ENCODE measurements at regions of chr22 and their contacts with region 1.

Region 1: DNA sequence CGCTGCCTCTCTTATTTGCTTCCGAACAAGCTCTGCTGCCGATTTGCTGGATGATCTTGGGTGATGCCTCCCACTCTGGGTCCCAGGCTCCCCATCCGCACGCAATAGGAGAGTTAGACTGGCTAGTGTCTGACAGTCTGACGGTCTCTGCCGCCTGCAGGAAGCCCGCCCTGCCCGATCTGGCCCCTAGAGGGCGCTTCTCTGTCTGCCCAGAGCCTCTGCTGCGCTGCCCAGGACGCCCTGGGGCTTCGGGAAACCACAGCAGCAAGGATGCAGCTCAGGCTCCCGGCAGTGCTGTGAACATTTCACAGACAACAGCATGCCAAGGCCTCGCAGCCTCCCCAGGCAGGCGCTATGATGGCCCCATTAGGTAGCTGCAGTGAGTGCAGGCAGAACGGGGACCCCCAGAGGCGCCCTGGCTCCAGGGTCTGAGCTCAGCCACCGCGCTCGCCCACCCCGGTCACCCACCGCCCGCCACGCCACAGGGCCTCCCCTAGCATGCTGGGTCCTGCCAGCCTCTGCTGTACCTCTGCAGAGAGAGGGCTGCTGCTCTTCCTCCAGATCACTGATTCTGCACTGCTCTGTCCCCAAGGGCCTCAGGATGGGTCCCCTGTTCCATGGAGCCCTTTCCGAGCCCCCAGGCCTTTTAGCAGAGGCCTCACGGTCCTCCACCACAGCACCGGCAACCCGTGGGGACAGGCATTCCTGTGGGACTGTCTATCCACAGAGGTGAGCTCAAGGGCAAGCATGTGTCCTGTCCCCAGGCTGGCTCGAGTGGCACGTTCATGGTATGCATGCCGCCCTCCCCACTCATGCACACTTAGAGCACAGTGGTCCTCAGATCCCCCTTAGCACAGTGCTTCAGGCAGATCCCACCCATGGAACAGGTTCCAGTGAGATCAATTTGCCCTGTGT is 4.3 kb upstream of the BAIAP2L2 start:
- DNase-seq: peak; percentile 67
- H3K4me3 ChIP-seq: no peak overlapping the region
- H3K27ac ChIP-seq: no peak overlapping the region
- H3K4me1 ChIP-seq: peaks cover 7% of the 10 kb centered on the region
- H3K27me3 ChIP-seq: no peaks in the 10 kb centered on the region
- CTCF ChIP-seq: peak; percentile 96 to 98

Region 2: DNA sequence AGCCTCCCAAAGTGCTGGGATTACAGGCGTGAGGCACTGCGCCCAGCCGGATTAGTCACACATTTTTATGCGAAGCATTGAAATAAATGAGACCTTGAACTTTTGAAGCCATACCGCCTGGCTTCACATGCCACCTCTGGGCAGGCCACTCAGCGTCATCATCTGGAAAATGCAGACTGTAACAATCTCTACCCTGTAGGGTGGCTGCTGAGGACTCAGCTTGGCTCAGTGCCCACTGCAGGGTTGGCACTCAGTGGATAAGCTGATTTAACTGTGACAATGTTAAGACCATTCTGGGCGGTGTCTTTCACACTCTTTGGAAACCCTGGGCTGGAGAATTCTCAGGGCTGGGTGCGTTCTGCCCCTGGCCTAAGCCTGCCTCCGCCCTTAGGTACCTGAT is 466.8 kb before region 1 on chr22:
- CTCF ChIA-PET with region 1: no interaction called
- dilution Hi-C with region 1: no loop called
- in situ Hi-C with region 1: no loop called
- intact Hi-C with region 1: no loop called
- DNase-seq: no peak
- H3K4me3 ChIP-seq: no peak overlapping the region
- H3K27ac ChIP-seq: no peak overlapping the region
- H3K4me1 ChIP-seq: peaks cover 4% of the 10 kb centered on the region
- H3K27me3 ChIP-seq: no peaks in the 10 kb centered on the region
- CTCF ChIP-seq: no peak

Region 3: GRCh38 chr22:38074181-38075104 is 40.3 kb before region 1 on chr22:
- CTCF ChIA-PET with region 1: no interaction called
- dilution Hi-C with region 1: no loop called
- in situ Hi-C with region 1: no loop called
- intact Hi-C with region 1: no loop called
- DNase-seq: peak; percentile 20
- H3K4me3 ChIP-seq: no peak overlapping the region
- H3K27ac ChIP-seq: no peak overlapping the region
- H3K4me1 ChIP-seq: no peaks in the 10 kb centered on the region
- H3K27me3 ChIP-seq: no peaks in the 10 kb centered on the region
- CTCF ChIP-seq: no peak

Region 4: DNA sequence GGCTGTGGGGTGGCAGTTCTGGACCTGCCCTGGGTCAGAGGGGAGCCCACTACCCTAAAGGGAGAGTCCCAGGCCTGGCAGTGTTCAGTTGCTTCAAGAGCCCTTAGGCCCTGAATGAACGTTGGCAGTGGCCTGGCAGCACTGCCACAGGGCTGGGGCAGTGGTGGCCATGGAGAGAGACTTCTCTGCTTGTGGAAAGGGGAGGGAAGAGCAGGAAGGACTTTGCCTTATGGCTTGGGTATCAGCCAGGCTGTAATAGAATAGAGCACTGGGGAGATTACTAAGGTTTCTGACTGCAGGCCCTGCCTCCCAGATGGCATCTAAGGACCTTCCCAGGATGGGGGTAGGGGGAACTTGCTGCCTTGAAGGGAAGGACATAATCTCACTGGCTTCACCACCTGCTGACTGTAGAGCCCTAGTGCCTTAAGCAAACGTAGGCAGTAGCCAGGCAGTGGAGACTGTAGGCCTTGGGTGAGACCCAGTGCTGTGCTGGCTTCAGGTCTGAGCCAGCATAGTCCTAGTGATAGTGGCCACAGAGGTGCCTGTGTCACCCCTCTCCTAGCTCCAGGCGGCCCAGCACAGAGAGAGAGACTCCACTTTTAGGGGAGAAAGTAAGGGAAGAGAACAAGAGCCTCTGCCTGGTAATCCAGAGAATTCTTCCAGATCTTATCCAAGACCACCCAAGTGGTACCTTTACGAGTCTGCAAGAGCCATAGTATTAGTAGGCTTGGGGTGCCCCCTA is 39.3 kb after region 1 on chr22:
- CTCF ChIA-PET with region 1: no interaction called
- dilution Hi-C with region 1: no loop called
- in situ Hi-C with region 1: no loop called
- intact Hi-C with region 1: loop called (anchors 1 kb)
- DNase-seq: no peak
- H3K4me3 ChIP-seq: no peak overlapping the region
- H3K27ac ChIP-seq: no peak overlapping the region
- H3K4me1 ChIP-seq: no peaks in the 10 kb centered on the region
- H3K27me3 ChIP-seq: no peaks in the 10 kb centered on the region
- CTCF ChIP-seq: no peak

Measured in mammary epithelial cell (primary cell).